BJ (cell line): ENCODE measurements at regions of chrX and their contacts with region 1.

Region 1: GRCh38 chrX:57918750-57919436 is 8.6 kb upstream of the ZXDA start:
- DNase-seq: no peak
- H3K4me3 ChIP-seq: no peak overlapping the region
- H3K27me3 ChIP-seq: no peaks in the 10 kb centered on the region
- CTCF ChIP-seq: peak; percentile 51

Region 2: GRCh38 chrX:57821703-57822375 is 97.1 kb before region 1 on chrX:
- CTCF ChIA-PET with region 1: interaction called, 10 read pairs
- POLR2A ChIA-PET with region 1: no interaction called
- DNase-seq: no peak
- H3K4me3 ChIP-seq: no peak overlapping the region
- H3K27me3 ChIP-seq: no peaks in the 10 kb centered on the region
- CTCF ChIP-seq: peak; percentile 44

Region 3: DNA sequence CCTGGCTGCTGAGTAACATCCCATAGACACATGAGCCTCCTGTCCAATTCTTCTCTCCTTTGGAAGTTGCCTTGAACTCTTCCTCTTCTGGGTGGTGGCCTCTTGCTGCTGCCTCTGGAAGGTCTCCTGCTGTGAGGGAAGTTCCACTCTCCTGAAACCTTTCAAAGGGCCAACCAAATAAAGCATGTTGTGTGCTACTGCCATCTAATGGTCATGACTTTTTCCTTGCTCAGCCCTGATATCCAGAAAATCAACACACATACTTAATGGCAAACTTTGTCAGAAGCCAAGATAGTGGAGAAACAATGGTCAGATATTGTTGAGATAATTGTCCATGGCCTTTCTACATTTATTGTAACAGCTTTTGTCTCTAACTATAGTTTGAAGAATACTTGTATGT is 10.5 kb after region 1 on chrX:
- CTCF ChIA-PET with region 1: no interaction called
- POLR2A ChIA-PET with region 1: no interaction called
- DNase-seq: no peak
- H3K4me3 ChIP-seq: no peak overlapping the region
- H3K27me3 ChIP-seq: no peaks in the 10 kb centered on the region
- CTCF ChIP-seq: peak; percentile 41; the same call in 1 of the 2 replicates